ENCODE measurements at regions of chr9 and their contacts with region 1.

Region 1: DNA sequence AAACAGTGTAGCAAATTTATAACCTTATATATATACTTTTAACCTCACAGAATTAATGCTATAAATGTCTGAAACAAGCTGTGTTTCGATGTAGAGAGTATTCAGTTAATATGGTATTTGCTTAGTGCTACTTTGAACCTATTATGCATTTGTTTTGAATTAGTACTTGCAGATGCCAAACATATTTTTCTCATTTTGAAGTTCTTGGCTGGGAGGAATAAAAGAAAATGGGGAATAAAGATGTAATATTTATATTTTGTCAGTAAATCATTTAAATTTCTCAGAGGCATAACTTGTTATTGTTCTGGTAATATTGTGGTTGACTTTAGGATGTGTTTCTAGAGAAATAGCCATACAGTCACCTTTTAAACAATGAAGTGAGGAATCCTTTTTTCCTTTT is 175.9 kb upstream of the IZUMO3 start:
- DNase-seq: no peak
- H3K4me3 ChIP-seq: no peak overlapping the region
- H3K27ac ChIP-seq: no peak overlapping the region
- H3K4me1 ChIP-seq: no peaks in the 10 kb centered on the region
- H3K27me3 ChIP-seq: no peaks in the 10 kb centered on the region
- CTCF ChIP-seq: no peak

Region 2: DNA sequence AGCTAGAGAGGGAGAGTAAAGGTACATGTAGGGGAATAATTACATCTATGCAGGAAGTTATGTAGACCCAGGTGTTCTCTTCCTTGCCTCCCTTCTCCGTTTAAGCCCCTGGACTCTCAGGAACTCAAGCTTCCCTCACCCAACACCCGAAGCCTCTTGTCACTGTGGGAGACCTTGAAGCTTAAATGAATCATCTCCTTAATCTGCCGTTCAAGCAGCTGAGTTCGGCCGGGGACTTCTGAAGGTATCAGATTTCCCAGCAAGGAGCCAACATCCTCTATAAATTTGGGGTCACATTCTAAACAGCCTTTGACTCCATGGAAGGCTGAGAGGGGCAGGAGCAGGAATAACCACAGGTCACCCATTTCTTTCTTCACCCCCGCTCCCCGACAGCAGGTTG is 176.3 kb before region 1 on chr9:
- intact Hi-C with region 1: no loop called
- DNase-seq: no peak
- H3K4me3 ChIP-seq: no peak overlapping the region
- H3K27ac ChIP-seq: no peak overlapping the region
- H3K4me1 ChIP-seq: no peaks in the 10 kb centered on the region
- H3K27me3 ChIP-seq: no peaks in the 10 kb centered on the region
- CTCF ChIP-seq: no peak

Region 3: GRCh38 chr9:24561957-24562356 is 159.7 kb before region 1 on chr9:
- intact Hi-C with region 1: no loop called
- DNase-seq: no peak
- H3K4me3 ChIP-seq: no peak overlapping the region
- H3K27ac ChIP-seq: no peak overlapping the region
- H3K4me1 ChIP-seq: no peaks in the 10 kb centered on the region
- H3K27me3 ChIP-seq: no peaks in the 10 kb centered on the region
- CTCF ChIP-seq: no peak

Region 4: DNA sequence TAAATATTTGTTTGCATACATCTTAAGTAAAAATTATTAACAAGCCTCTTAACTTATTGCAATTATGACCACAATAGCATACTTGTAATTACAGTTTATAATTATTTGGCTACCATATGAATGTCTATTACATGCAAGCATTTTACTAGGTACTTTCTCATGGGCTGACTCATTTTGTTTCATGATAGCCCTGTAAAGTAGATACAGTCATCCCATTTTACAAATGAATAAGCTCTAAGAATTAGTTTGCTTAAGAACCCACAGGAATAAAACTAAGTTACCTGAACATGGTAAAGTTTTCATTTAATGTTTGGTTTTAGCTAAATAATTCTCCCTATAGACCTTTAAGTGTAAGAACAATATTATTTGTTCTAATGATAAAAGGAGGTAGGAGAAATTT is 49.3 kb before region 1 on chr9:
- intact Hi-C with region 1: loop called (anchors 5 kb)
- DNase-seq: no peak
- H3K4me3 ChIP-seq: no peak overlapping the region
- H3K27ac ChIP-seq: no peak overlapping the region
- H3K4me1 ChIP-seq: no peaks in the 10 kb centered on the region
- H3K27me3 ChIP-seq: no peaks in the 10 kb centered on the region
- CTCF ChIP-seq: no peak

Measured in ascending aorta (tissue), 2 donors.